ENCODE measurements at regions of chr2 and their contacts with region 1.

Region 1: GRCh38 chr2:189204322-189204941 is 24.9 kb upstream of the COL5A2 start:
- DNase-seq: no peak

Region 2: GRCh38 chr2:187748958-187749357 is 1455.5 kb before region 1 on chr2:
- intact Hi-C with region 1: loop called in 1 of 2 experiments (anchors 10 kb)
- DNase-seq: no peak